Activated naive CD4-positive, alpha-beta T cell treated with anti-CD3 and anti-CD28 coated beads, Interleukin-2, amount 10 ng/mL, durations not matched to agents 7 days and 5 days (primary cell): ENCODE measurements at regions of chr3 and their contacts with region 1.

Region 1: DNA sequence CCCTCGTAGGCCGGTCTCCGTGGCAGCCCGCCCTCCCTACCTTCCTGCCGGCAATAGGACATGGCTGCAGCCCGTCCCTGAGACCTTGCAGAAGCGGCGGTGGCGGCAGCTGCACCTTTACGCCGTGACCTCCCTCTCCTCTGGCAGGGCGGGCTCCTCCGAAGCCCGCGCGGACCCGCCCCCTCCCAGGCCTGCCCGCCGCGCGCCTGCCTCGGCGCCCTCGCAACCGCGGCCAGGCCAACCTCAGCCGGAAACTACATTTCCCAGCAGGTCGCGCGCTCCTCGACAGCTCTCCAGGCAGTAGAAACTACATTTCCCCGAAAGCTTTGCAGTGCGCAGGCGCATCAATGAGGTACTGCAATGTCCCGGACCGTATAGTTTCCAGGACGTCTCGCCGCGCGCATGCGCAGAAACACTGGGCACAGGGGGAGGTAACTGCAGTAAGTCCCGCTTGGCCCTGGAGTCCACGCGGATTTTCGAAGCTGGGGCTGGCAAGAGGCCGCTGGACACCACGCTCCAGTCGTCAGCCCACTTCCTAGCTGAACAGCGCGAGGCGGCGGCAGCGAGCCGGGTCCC is at the starts of genes CHCHD4 and TMEM43:
- DNase-seq: peak; percentile 99
- H3K4me3 Mint-ChIP-seq: peak within 1 kb of the TSS; percentile 95
- H3K27ac Mint-ChIP-seq: peak within 1 kb of the TSS; percentile 95
- H3K4me1 Mint-ChIP-seq: peaks cover 55% of the 10 kb centered on the region
- H3K27me3 Mint-ChIP-seq: no peaks in the 10 kb centered on the region

Region 2: DNA sequence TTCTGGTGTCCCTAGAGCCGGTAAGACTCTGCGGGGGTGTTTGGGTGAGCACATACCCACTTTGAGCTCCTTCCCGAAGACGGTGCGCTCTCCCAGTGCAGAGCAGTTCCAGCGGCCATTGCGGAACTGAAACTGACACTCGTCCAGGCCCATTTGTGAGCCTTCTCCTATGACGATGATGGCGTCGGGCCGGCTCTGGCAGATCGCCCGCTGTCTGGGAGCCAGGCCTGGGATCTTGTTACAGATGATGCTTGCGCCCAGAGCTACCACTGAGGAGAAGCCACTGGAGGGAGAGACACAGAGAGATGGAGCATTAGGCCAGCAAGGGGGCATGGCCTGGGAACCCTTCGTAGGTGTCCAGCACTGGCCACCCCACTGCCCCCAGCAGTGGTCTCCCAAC is 249.8 kb before region 1 on chr3:
- CTCF ChIA-PET with region 1: no interaction called
- DNase-seq: no peak
- H3K4me3 Mint-ChIP-seq: no peak overlapping the region
- H3K27ac Mint-ChIP-seq: no peak overlapping the region
- H3K4me1 Mint-ChIP-seq: peaks cover 12% of the 10 kb centered on the region
- H3K27me3 Mint-ChIP-seq: peaks cover 75% of the 10 kb centered on the region

Region 3: GRCh38 chr3:13895155-13896105 is 229.3 kb before region 1 on chr3:
- CTCF ChIA-PET with region 1: interaction called, 16 read pairs
- DNase-seq: peak; percentile 98
- H3K4me3 Mint-ChIP-seq: peak overlapping the region; percentile 84
- H3K27ac Mint-ChIP-seq: peak overlapping the region; percentile 88
- H3K4me1 Mint-ChIP-seq: peaks cover 36% of the 10 kb centered on the region
- H3K27me3 Mint-ChIP-seq: peaks cover 33% of the 10 kb centered on the region

Region 4: GRCh38 chr3:14016885-14017475 is 107.7 kb before region 1 on chr3:
- CTCF ChIA-PET with region 1: no interaction called
- DNase-seq: no peak
- H3K4me3 Mint-ChIP-seq: no peak overlapping the region
- H3K27ac Mint-ChIP-seq: no peak overlapping the region
- H3K4me1 Mint-ChIP-seq: no peaks in the 10 kb centered on the region
- H3K27me3 Mint-ChIP-seq: peaks cover 12% of the 10 kb centered on the region

Region 5: DNA sequence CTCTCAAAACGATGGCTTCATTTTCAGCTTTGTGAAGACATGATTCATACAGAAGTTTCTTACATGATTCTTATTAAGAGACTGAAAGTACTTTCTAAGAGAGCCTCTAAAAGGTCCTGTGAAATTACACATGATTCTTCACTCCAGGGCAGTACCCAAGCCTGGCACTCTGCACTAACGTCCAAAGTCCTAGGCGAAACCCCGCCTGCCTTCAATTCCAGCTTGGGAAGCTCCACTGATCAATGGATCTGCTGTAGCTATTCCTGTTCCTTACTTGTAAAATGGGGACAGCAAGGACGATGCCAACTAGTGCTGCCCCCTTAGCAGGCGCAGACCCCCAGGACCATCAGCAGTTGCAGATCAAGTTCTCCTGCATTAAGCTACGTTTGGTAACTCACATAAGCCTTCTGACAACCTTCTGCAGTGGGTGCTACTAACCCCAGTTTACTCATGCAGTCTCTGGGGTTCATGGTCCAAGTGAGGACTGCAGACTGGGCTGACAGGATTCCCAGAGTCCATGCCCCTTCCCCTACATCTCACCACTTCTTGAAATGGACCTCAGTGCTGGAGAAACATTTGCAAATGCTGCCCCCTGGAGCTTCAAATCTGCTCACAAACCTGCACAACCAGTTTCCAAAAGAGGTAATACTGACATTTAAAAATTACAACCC is 10.6 kb before region 1 on chr3:
- CTCF ChIA-PET with region 1: interaction called, 15 read pairs
- DNase-seq: no peak
- H3K4me3 Mint-ChIP-seq: no peak overlapping the region
- H3K27ac Mint-ChIP-seq: no peak overlapping the region
- H3K4me1 Mint-ChIP-seq: no peaks in the 10 kb centered on the region
- H3K27me3 Mint-ChIP-seq: no peaks in the 10 kb centered on the region

Region 6: DNA sequence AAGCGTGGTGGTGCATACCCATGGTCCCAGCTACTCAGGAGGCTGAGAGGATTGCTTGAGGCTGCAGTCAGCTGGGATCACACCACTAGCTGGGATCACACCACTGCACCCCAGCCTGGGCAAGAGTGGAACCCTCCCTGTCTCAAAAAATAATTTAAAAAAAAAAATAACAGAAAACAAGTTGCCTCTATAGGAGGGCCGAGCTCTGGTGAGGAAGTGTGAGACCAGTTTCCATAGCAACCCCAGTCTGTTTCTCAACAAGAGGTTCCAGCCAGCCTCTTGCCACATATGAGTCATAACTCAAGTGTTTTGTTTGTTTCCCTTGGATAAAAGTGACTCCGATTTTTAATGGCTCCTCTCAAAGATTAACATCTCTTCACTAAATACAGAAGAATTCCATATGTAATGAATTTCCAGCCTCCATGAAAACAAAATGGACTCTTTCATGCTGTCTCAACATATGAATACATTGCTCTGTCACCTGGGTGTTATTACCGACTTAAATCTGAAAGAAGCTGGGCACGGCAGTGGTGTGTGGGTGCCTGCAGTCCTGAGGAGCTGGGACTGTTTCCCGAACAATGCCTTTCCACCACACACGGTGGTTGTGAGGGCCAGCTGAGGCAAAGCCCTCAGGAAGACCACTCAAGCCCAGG is 19.8 kb after region 1 on chr3:
- CTCF ChIA-PET with region 1: interaction called, 22 read pairs
- DNase-seq: peak; percentile 79
- H3K4me3 Mint-ChIP-seq: peak overlapping the region; percentile 1
- H3K27ac Mint-ChIP-seq: peak overlapping the region; percentile 90
- H3K4me1 Mint-ChIP-seq: peaks cover 48% of the 10 kb centered on the region
- H3K27me3 Mint-ChIP-seq: no peaks in the 10 kb centered on the region

Region 7: DNA sequence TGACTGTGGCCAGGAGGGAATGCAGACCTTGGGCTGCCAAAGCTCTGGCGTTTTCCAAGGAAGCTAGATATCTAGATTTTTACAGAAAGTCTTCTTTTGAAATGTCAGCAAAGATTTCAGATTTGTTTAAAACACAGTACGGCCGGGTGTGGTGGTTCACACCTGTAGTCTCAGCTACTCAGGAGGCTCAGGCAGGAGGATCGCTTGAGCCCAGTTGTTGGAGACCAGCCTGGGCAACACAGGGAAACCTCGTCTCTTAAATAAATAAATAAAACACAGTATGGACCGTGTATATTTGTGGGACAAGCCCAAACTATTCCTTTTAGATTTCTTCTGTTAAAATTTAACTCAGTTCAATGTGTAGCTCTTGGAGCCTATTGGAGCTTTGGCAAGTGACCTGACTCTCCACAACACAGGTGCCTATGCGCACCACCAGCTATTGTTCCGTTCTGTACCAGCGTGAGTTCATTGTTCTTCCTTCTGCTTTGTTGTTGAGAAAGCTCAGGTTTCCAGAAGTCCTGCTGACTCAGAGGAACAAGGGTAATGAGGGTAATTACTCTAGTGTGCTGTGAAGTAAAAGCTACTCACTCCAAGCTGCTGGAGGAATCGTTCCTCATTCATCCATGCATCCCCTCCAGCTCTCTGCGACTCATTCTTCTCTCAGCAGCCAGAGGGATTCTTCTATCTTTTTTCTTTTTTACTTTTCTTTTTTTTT is 204.6 kb after region 1 on chr3:
- CTCF ChIA-PET with region 1: no interaction called
- DNase-seq: no peak
- H3K4me3 Mint-ChIP-seq: no peak overlapping the region
- H3K27ac Mint-ChIP-seq: no peak overlapping the region
- H3K4me1 Mint-ChIP-seq: no peaks in the 10 kb centered on the region
- H3K27me3 Mint-ChIP-seq: peaks cover 25% of the 10 kb centered on the region